ENCODE measurements at regions of chr11 and their contacts with region 1.

Region 1: GRCh38 chr11:13448876-13449275 is 14.1 kb downstream of the BTBD10 start:
- DNase-seq: no peak
- H3K27ac ChIP-seq: no peak overlapping the region
- CTCF ChIP-seq: no peak

Region 2: GRCh38 chr11:13462901-13463778 is 14.3 kb after region 1 on chr11 and contains the start of gene BTBD10:
- CTCF ChIA-PET with region 1: interaction called, 10 read pairs
- POLR2A ChIA-PET with region 1: no interaction called
- DNase-seq: peak; percentile 91
- H3K27ac ChIP-seq: peak within 1 kb of the TSS; percentile 86
- CTCF ChIP-seq: no peak

Measured in RWPE1 (cell line).